Colonic mucosa (tissue), 4 donors: ENCODE measurements at regions of chr6 and their contacts with region 1.

Region 1: GRCh38 chr6:29792123-29793035 is 35.2 kb upstream of the HLA-G start:
- DNase-seq: peak; percentile 83
- H3K4me3 ChIP-seq: peak overlapping the region; percentile 65
- H3K27ac ChIP-seq: no peak overlapping the region
- H3K4me1 ChIP-seq: no peaks in the 10 kb centered on the region
- H3K27me3 ChIP-seq: no peaks in the 10 kb centered on the region
- CTCF ChIP-seq: peak; percentile 37

Region 2: GRCh38 chr6:29752451-29753308 is 39.7 kb before region 1 on chr6:
- intact Hi-C with region 1: loop called (anchors 5 kb)
- DNase-seq: peak; percentile 90
- H3K4me3 ChIP-seq: peak overlapping the region; percentile 42
- H3K27ac ChIP-seq: peak overlapping the region; percentile 83
- H3K4me1 ChIP-seq: no peaks in the 10 kb centered on the region
- H3K27me3 ChIP-seq: no peaks in the 10 kb centered on the region
- CTCF ChIP-seq: peak; percentile 94

Region 3: GRCh38 chr6:29955783-29956182 is 163.4 kb after region 1 on chr6:
- intact Hi-C with region 1: loop called (anchors 5 kb)
- DNase-seq: no peak
- H3K4me3 ChIP-seq: no peak overlapping the region
- H3K27ac ChIP-seq: no peak overlapping the region
- H3K4me1 ChIP-seq: no peaks in the 10 kb centered on the region
- H3K27me3 ChIP-seq: no peaks in the 10 kb centered on the region
- CTCF ChIP-seq: no peak